ENCODE measurements at regions of chr17 and their contacts with region 1.

Region 1: GRCh38 chr17:32783602-32784001 is 93.3 kb downstream of the MYO1D start:
- DNase-seq: no peak
- H3K4me3 Mint-ChIP-seq: no peak overlapping the region
- H3K27ac Mint-ChIP-seq: no peak overlapping the region
- H3K4me1 Mint-ChIP-seq: no peaks in the 10 kb centered on the region
- H3K27me3 Mint-ChIP-seq: peaks cover 3% of the 10 kb centered on the region

Region 2: GRCh38 chr17:32769839-32770238 is 13.8 kb before region 1 on chr17:
- CTCF ChIA-PET with region 1: interaction called, 14 read pairs
- DNase-seq: no peak
- H3K4me3 Mint-ChIP-seq: no peak overlapping the region
- H3K27ac Mint-ChIP-seq: no peak overlapping the region
- H3K4me1 Mint-ChIP-seq: no peaks in the 10 kb centered on the region
- H3K27me3 Mint-ChIP-seq: no peaks in the 10 kb centered on the region

Region 3: DNA sequence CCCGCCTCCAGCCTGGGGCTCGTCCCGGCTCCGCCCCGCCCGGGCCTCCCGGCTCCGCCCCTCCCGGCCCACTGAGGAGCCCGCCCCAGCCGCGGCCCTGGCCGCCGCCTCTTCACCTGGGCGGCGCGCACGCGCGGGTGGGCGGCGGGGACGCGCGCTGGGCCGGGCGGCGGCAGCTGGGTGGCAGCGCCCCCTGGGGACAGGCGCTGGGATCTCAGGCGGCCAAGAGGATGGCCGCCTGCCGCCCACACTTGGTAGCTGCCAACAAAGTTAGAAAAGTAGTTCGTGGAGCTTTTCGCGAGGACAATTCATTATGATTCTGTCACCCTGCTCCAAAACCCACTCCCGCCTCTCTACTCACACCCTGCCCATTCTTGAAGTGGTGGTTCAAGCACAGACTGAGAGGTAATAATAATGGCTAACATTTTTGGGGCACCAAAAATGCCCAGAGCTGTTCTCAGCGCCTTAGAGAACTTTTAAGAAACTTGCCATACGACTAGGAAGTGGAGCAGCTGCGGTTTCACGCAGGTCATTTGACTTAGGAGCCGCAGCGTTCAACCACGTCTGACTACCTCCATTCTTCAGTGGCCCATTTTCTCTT is 93.7 kb after region 1 on chr17:
- CTCF ChIA-PET with region 1: interaction called, 99 read pairs
- DNase-seq: peak; percentile 92
- H3K4me3 Mint-ChIP-seq: peak overlapping the region; percentile 64
- H3K27ac Mint-ChIP-seq: peak overlapping the region; percentile 46
- H3K4me1 Mint-ChIP-seq: peaks cover 13% of the 10 kb centered on the region
- H3K27me3 Mint-ChIP-seq: peaks cover 33% of the 10 kb centered on the region

Region 4: DNA sequence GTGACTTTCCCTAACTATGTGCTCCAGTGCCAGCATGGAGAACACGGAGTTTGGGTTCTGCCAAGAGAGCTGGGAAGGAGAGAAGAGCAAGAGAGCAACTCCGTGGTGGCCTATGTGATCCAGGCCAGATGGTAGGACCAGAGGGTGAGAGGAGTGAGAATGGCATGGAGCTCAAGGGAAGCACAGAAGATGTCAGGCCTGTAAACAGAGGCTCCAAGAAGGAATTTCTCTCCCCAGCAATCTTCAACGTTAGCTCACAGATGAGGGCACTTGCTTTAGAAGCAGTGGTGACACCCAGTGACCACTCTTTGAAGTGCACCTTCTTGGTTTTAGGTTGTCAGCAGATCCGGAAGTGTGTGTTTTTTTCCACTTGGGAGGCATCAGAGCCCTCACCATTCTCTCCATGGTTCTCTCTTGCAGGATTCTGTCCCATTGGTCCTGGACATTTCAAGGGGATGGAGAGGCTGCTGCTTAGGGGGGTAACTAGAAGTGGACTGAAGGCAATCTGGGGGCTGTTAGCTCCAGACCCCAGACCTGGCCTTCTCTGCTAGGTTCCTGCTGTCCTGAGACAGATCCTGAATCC is 126.3 kb after region 1 on chr17:
- CTCF ChIA-PET with region 1: interaction called, 21 read pairs
- DNase-seq: peak; percentile 67
- H3K4me3 Mint-ChIP-seq: no peak overlapping the region
- H3K27ac Mint-ChIP-seq: no peak overlapping the region
- H3K4me1 Mint-ChIP-seq: peaks cover 4% of the 10 kb centered on the region
- H3K27me3 Mint-ChIP-seq: peaks cover 19% of the 10 kb centered on the region

Region 5: DNA sequence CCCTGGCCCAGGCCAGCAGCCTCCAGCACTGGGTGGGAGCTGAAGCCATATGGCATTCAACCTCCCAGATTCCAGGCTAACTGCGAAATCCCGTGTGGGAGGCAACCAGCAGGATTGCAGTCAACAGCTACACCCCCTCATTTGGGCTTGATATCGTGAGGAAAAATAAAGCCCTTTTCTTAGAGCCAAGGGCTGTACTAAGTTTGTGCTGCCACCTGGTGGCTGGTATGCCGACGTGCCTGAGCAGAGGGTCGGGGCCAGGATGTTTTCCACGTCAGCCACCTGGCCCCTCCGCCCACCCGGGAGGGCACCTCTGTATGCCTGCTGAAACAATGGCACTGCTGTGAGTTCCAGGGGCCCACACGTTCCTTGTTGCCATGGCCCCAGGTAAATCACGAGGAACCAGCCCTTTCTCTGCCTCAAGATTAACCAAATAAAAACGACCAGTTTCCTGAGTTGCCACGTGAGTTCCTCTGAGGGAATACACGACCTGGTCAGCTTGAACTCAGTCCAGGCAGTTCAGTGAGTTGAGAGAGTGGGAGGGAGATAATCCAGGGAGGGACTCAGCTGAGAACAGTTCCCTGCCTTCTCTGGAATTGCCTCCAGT is 153.4 kb after region 1 on chr17:
- CTCF ChIA-PET with region 1: interaction called, 29 read pairs
- DNase-seq: peak; percentile 73
- H3K4me3 Mint-ChIP-seq: no peak overlapping the region
- H3K27ac Mint-ChIP-seq: no peak overlapping the region
- H3K4me1 Mint-ChIP-seq: peaks cover 2% of the 10 kb centered on the region
- H3K27me3 Mint-ChIP-seq: peaks cover 45% of the 10 kb centered on the region

Region 6: GRCh38 chr17:32997753-32998632 is 214.4 kb after region 1 on chr17:
- CTCF ChIA-PET with region 1: interaction called, 11 read pairs
- DNase-seq: peak; percentile 80
- H3K4me3 Mint-ChIP-seq: no peak overlapping the region
- H3K27ac Mint-ChIP-seq: no peak overlapping the region
- H3K4me1 Mint-ChIP-seq: peaks cover 2% of the 10 kb centered on the region
- H3K27me3 Mint-ChIP-seq: peaks cover 24% of the 10 kb centered on the region